ENCODE measurements at regions of chr16 and their contacts with region 1.

Region 1: GRCh38 chr16:27222249-27223225 is 19.2 kb downstream of the KDM8 start:
- DNase-seq: no peak
- H3K4me3 ChIP-seq: no peak overlapping the region
- CTCF ChIP-seq: no peak

Region 2: GRCh38 chr16:27189335-27189972 is 33.1 kb before region 1 on chr16:
- CTCF ChIA-PET with region 1: no interaction called
- POLR2A ChIA-PET with region 1: no interaction called
- DNase-seq: no peak
- H3K4me3 ChIP-seq: no peak overlapping the region
- CTCF ChIP-seq: no peak

Region 3: GRCh38 chr16:27203429-27204231 is 18.9 kb before region 1 on chr16 and contains the start of gene KDM8:
- CTCF ChIA-PET with region 1: interaction called, 3 read pairs
- POLR2A ChIA-PET with region 1: interaction called, 11 read pairs
- DNase-seq: peak; percentile 96
- H3K4me3 ChIP-seq: peak within 1 kb of the TSS; percentile 99
- CTCF ChIP-seq: no peak

Region 4: GRCh38 chr16:27268376-27269299 is 46.1 kb after region 1 on chr16 and contains the start of gene NSMCE1:
- CTCF ChIA-PET with region 1: no interaction called
- POLR2A ChIA-PET with region 1: no interaction called
- DNase-seq: peak; percentile 74
- H3K4me3 ChIP-seq: peak within 1 kb of the TSS; percentile 87
- CTCF ChIP-seq: peak; percentile 42

Measured in AG04449 (cell line).